Sigmoid colon (tissue), 7 donors: ENCODE measurements at regions of chr16 and their contacts with region 1.

Region 1: GRCh38 chr16:4288148-4288921 is 15.5 kb upstream of the TFAP4 start:
- DNase-seq: peak; percentile 89
- H3K4me3 ChIP-seq: peak overlapping the region in 1 of 4 donors; percentile 12
- H3K27ac ChIP-seq: peak overlapping the region in 1 of 4 donors; percentile 15
- H3K4me1 ChIP-seq: peaks cover 0 to 35% (median 27%) of the 10 kb centered on the region in 4 donors
- H3K27me3 ChIP-seq: no peaks in the 10 kb centered on the region
- CTCF ChIP-seq: peak; percentile 87 to 98 (median 92)
- EP300 ChIP-seq: no peak
- POLR2A ChIP-seq: no peak

Region 2: GRCh38 chr16:4271176-4272066 is 16.9 kb before region 1 on chr16:
- intact Hi-C with region 1: loop called (anchors 2 kb)
- DNase-seq: peak; percentile 94
- H3K4me3 ChIP-seq: peak overlapping the region; percentile 66 to 96 (median 88)
- H3K27ac ChIP-seq: peak overlapping the region; percentile 89 to 96 (median 94)
- H3K4me1 ChIP-seq: peaks cover 0 to 26% (median 15%) of the 10 kb centered on the region in 4 donors
- H3K27me3 ChIP-seq: no peaks in the 10 kb centered on the region
- CTCF ChIP-seq: no peak
- EP300 ChIP-seq: no peak
- POLR2A ChIP-seq: no peak

Region 3: GRCh38 chr16:4350787-4351659 is 62.7 kb after region 1 on chr16 and contains the start of gene PAM16:
- intact Hi-C with region 1: no loop called
- DNase-seq: peak; percentile 98
- H3K4me3 ChIP-seq: peak within 1 kb of the TSS; percentile 56 to 100 (median 78)
- H3K27ac ChIP-seq: peak within 1 kb of the TSS; percentile 80 to 90 (median 84)
- H3K4me1 ChIP-seq: peaks cover 0 to 27% (median 19%) of the 10 kb centered on the region in 4 donors
- H3K27me3 ChIP-seq: no peaks in the 10 kb centered on the region
- CTCF ChIP-seq: no peak
- EP300 ChIP-seq: no peak
- POLR2A ChIP-seq: no peak
- total RNA-seq, gene PAM16: 36.7 to 52.7 (median 43.6) TPM

Region 4: DNA sequence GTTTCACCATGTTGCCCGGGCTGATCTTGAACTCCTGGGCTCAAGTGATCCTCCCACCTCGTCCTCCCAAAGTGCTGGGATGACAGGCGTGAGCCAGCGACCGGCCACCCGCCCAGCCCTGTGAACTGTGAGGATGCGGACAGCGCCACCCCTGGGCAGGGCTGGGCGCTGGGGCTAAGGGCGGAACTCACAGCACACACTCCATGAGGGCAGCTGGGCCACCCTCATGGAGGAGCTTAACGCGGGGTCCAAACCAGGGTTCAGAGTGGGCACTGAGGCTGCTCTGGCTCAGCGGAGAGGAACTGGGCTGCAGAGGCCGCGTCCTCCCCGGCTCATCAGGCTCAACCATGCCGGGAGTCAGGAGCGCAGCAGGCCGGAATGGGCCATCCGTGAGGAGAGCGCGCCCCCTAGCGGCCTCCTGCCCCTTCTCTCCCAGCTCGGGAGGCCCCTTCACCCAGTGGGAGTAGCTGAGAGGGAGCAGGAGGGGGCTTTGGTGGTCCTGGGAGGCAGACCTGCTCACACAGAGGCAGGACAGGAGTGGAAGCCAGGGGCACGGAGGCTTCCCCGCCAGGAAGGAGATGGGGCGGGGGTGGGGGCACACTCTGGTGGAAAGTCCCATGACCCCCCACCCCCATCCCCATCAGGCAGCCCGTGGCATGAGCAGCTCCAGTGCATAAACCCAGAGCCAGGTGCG is 114.3 kb after region 1 on chr16:
- intact Hi-C with region 1: loop called (anchors 5 kb)
- DNase-seq: peak; percentile 92
- H3K4me3 ChIP-seq: peak overlapping the region in 1 of 4 donors; percentile 23
- H3K27ac ChIP-seq: no peak overlapping the region
- H3K4me1 ChIP-seq: peaks cover 0 to 7% (median 6%) of the 10 kb centered on the region in 4 donors
- H3K27me3 ChIP-seq: no peaks in the 10 kb centered on the region
- CTCF ChIP-seq: peak; percentile 93 to 95 (median 94)
- EP300 ChIP-seq: no peak
- POLR2A ChIP-seq: no peak

Region 5: GRCh38 chr16:4487955-4488498 is 199.7 kb after region 1 on chr16:
- intact Hi-C with region 1: no loop called
- DNase-seq: no peak
- H3K4me3 ChIP-seq: no peak overlapping the region
- H3K27ac ChIP-seq: no peak overlapping the region
- H3K4me1 ChIP-seq: peaks cover 0 to 4% (median 0%) of the 10 kb centered on the region in 4 donors
- H3K27me3 ChIP-seq: no peaks in the 10 kb centered on the region
- CTCF ChIP-seq: no peak
- EP300 ChIP-seq: no peak
- POLR2A ChIP-seq: no peak